ENCODE measurements at regions of chr3 and their contacts with region 1.

Region 1: GRCh38 chr3:117439812-117440211 is 730.2 kb downstream of the TUSC7 start:
- DNase-seq: peak; percentile 1 to 24
- ATAC-seq: peak; percentile 43 to 50; a peak in 2 of 6 replicates
- H3K4me3 ChIP-seq: no peak overlapping the region
- H3K27ac ChIP-seq: no peak overlapping the region
- H3K4me1 ChIP-seq: no peaks in the 10 kb centered on the region
- CTCF ChIP-seq: peak; percentile 28; the same call in 1 of the 3 replicates
- EP300 ChIP-seq: no peak
- POLR2A ChIP-seq: no peak
- RAD21 ChIP-seq: peak; percentile 37 to 52; a peak in 4 of 5 replicates

Region 2: GRCh38 chr3:117450026-117450425 is 10.2 kb after region 1 on chr3:
- CTCF ChIA-PET with region 1: interaction called, 11 read pairs
- POLR2A ChIA-PET with region 1: no interaction called
- DNase-seq: no peak
- ATAC-seq: no peak
- H3K4me3 ChIP-seq: no peak overlapping the region
- H3K27ac ChIP-seq: no peak overlapping the region
- H3K4me1 ChIP-seq: no peaks in the 10 kb centered on the region
- CTCF ChIP-seq: no peak
- EP300 ChIP-seq: no peak
- POLR2A ChIP-seq: no peak
- RAD21 ChIP-seq: no peak